HepG2 (cell line): ENCODE measurements at regions of chr7 and their contacts with region 1.

Region 1: DNA sequence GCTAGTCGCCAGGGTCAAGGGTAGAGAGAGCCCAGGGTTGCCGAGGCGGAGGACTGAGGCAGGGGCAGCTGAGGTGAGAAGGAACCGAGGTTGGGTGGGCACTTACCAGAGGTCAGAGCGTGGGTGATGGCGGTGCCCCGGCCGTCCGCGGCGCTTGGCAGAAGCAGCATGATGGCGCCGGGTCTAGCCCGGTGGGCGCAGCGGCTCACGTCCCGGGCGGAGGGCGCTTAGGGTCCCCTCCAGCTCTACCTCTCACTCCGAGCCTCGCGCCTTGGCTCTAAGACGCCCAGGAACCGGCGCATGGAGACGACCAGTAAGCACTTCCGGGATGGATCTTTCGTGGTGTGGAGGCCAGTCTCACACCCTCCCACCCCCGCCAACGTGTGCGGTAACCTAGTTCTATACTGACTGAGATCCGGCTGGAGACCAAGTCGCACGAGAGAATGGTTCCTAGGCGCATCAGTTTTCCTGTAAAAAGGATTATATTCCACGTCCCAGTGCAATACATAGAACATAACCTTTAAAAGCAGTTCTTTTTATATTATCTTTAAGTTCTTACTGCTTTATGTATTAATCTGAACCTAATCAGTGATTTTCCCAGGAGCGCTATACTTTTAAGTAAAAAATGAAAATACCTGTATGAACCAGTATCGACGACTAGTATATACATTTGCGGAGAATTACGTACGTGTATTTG is at the start of gene DNAJC2:
- DNase-seq: peak; percentile 87
- ATAC-seq: peak; percentile 92
- H3K4me3 ChIP-seq: peak within 1 kb of the TSS; percentile 75 to 92 (median 86)
- H3K27ac ChIP-seq: peak within 1 kb of the TSS; percentile 82
- H3K4me1 ChIP-seq: peaks cover 48% of the 10 kb centered on the region
- H3K27me3 ChIP-seq: no peaks in the 10 kb centered on the region; a peak in 1 of 5 replicates
- CTCF ChIP-seq: no peak
- EP300 ChIP-seq: peak in 1 of 2 experiments; percentile 51; a peak in 1 of 4 replicates
- POLR2A ChIP-seq: peak; percentile 84 to 91
- RAD21 ChIP-seq: peak; percentile 37; the same call in 1 of the 2 replicates
- total RNA-seq, gene DNAJC2: 42.0 and 53.6 TPM in 2 replicates

Region 2: DNA sequence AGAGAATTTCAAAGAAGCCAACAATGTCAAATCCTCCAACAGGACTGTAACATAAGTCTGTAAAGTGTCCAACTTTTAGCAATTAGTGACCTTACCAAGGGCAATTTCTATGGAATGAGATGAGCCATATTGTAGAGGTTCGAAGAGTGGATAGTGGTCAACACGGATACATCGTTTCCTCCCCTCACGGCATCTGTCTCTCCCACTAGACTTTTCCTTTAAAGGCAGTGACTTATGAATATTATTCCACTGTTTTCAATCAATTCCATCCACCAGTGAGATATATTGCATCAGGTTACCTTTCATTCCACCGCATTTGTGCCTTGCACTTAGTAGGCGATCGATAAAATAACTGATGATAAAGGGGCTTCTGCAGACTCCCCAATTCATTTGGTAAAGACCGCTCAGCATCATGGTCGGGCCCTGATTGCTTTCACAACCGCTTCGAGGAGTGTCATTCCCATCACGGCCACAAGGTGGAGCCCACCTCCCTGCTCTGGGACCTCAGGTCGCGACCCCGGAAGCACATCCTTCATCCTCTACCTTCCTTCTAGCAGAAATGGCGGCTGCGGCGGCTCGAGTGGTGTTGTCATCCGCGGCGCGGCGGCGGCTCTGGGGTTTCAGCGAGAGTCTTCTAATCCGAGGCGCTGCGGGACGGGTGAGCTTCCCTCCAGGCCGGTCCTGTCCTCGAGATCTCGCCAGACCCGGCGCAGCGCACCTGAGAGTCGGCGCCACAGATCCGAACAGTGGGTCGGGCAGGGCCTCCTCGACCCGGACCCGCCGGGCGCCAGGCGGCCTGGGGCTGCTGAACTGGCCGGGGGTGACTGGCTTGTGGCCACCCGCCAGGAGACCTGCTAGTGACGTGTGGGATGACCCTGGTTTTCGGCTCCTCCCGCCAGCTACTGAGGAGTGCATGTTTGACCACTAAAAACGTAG is 47.4 kb before region 1 on chr7 and contains the start of gene PMPCB:
- CTCF ChIA-PET with region 1: no interaction called
- POLR2A ChIA-PET with region 1: no interaction called
- in situ Hi-C with region 1: no loop called
- intact Hi-C with region 1: loop called (anchors 5 kb)
- DNase-seq: peak; percentile 88
- ATAC-seq: peak; percentile 97
- H3K4me3 ChIP-seq: peak within 1 kb of the TSS; percentile 76 to 93 (median 82)
- H3K27ac ChIP-seq: peak within 1 kb of the TSS; percentile 82
- H3K4me1 ChIP-seq: peaks cover 20% of the 10 kb centered on the region
- H3K27me3 ChIP-seq: no peaks in the 10 kb centered on the region
- CTCF ChIP-seq: peak; percentile 98
- EP300 ChIP-seq: peak in 1 of 2 experiments; percentile 31; a peak in 1 of 4 replicates
- POLR2A ChIP-seq: peak; percentile 75 to 76
- RAD21 ChIP-seq: peak; percentile 82
- total RNA-seq, gene PMPCB: 75.9 and 80.8 TPM in 2 replicates

Region 3: DNA sequence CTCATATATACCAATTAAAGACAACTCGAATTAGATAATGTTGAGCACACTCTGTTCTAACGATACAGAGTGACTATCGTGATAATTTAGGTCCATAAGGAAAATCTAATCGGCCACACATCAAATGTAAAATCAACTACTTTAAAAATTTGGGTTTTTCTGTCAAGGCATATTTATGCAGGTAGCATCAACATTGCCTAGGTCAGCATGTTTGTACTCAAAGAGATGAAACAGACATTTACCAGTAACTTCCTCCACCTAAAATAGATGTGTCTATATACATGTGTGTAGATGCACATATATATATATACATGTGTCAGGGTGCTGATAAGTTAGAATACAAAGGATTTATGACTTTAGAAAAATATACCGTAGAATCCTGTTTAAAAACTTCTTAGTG is 24.8 kb after region 1 on chr7:
- CTCF ChIA-PET with region 1: no interaction called
- POLR2A ChIA-PET with region 1: no interaction called
- in situ Hi-C with region 1: no loop called
- intact Hi-C with region 1: no loop called
- DNase-seq: no peak
- ATAC-seq: no peak
- H3K4me3 ChIP-seq: no peak overlapping the region
- H3K27ac ChIP-seq: no peak overlapping the region
- H3K4me1 ChIP-seq: no peaks in the 10 kb centered on the region
- H3K27me3 ChIP-seq: no peaks in the 10 kb centered on the region
- CTCF ChIP-seq: no peak
- EP300 ChIP-seq: no peak
- POLR2A ChIP-seq: no peak
- RAD21 ChIP-seq: no peak

Region 4: GRCh38 chr7:103387242-103387641 is 42.6 kb after region 1 on chr7:
- CTCF ChIA-PET with region 1: no interaction called
- POLR2A ChIA-PET with region 1: interaction called, 4 read pairs
- in situ Hi-C with region 1: no loop called
- intact Hi-C with region 1: loop called (anchors 5 kb)
- DNase-seq: no peak
- ATAC-seq: no peak
- H3K4me3 ChIP-seq: no peak overlapping the region
- H3K27ac ChIP-seq: no peak overlapping the region
- H3K4me1 ChIP-seq: peaks cover 45% of the 10 kb centered on the region
- H3K27me3 ChIP-seq: no peaks in the 10 kb centered on the region
- CTCF ChIP-seq: no peak
- EP300 ChIP-seq: no peak
- POLR2A ChIP-seq: no peak
- RAD21 ChIP-seq: no peak

Region 5: GRCh38 chr7:103396471-103396870 is 51.9 kb after region 1 on chr7:
- CTCF ChIA-PET with region 1: no interaction called
- POLR2A ChIA-PET with region 1: no interaction called
- in situ Hi-C with region 1: loop called (anchors 10 kb)
- intact Hi-C with region 1: no loop called
- DNase-seq: no peak
- ATAC-seq: no peak
- H3K4me3 ChIP-seq: no peak overlapping the region
- H3K27ac ChIP-seq: no peak overlapping the region
- H3K4me1 ChIP-seq: peaks cover 16% of the 10 kb centered on the region
- H3K27me3 ChIP-seq: no peaks in the 10 kb centered on the region; a peak in 1 of 5 replicates
- CTCF ChIP-seq: no peak
- EP300 ChIP-seq: no peak
- POLR2A ChIP-seq: no peak
- RAD21 ChIP-seq: no peak

Region 6: GRCh38 chr7:103418241-103418640 is 73.6 kb after region 1 on chr7:
- CTCF ChIA-PET with region 1: no interaction called
- POLR2A ChIA-PET with region 1: no interaction called
- in situ Hi-C with region 1: no loop called
- intact Hi-C with region 1: no loop called
- DNase-seq: no peak
- ATAC-seq: no peak
- H3K4me3 ChIP-seq: no peak overlapping the region
- H3K27ac ChIP-seq: no peak overlapping the region
- H3K4me1 ChIP-seq: 0 out of 2 replicates have a peak, but pooled peaks cover 6% of the 10 kb centered on the region
- H3K27me3 ChIP-seq: no peaks in the 10 kb centered on the region; a peak in 1 of 5 replicates
- CTCF ChIP-seq: no peak
- EP300 ChIP-seq: no peak
- POLR2A ChIP-seq: no peak
- RAD21 ChIP-seq: no peak